PC-9 (cell line): ENCODE measurements at regions of chr22 and their contacts with region 1.

Region 1: DNA sequence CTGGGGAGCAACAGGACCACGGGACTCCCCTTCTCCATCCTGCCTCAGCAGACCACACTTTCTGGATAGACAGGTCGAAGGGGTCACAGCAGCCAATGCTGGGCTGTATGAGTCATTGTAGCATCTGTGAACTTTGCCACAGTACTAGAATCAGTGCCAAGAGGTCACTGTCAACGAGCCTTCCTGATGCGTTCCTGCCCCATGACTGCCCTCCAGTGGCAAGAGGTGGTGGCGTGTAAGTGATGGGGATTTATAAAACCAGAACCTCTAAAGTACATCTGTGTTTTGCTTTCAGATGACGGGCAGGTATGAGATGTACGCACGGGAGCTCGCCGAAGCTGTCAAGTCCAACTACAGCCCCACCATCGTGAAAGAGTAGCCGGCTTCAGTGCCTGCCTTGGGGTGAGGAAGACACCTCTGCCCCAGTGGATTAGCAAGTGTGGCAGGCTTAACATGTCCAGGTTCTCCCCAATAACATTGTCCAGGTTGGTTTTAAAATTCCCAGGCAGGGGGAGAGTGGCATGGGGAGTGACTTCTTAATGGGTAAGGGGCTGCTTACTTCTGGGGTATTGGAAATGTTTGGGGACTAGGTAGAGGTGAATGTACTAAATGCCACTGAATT is 29.4 kb downstream of the GUCD1 start:
- DNase-seq: peak; percentile 66 to 68
- H3K4me3 ChIP-seq: no peak overlapping the region
- H3K27ac ChIP-seq: no peak overlapping the region
- H3K4me1 ChIP-seq: peaks cover 26% of the 10 kb centered on the region
- H3K27me3 ChIP-seq: no peaks in the 10 kb centered on the region
- CTCF ChIP-seq: peak; percentile 91

Region 2: DNA sequence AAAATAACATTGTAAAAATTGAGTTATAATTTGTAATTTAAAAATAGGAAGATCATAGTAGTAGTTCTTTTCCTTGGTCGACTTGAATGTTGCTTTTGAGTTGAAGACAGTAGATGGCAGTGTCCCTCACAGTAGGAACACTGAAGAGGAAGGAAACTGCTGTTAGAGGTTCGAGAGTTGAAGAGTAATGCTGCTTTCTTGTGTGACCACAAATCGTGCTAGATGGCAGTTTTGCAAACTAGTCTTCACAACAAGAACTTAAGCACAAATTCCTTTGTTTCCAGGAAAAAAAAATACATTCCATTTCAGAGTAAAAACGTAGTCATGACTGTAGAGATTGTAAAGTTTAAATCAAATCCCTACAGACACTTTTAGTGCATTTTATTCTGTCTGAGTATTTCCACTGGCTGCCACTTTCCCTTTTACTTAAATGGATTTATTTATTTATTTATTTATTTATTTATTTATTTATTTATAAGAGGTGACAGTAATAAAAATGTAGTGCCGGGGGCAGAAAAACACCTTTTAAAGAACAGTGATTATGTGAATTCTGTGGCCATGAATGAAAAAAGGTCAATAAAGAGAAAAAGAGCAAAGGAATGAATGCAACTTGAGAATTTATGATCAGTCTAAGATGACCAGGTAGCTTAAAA is 200.3 kb before region 1 on chr22:
- CTCF ChIA-PET with region 1: interaction called, 4 read pairs
- POLR2A ChIA-PET with region 1: no interaction called
- intact Hi-C with region 1: loop called (anchors 10 kb)
- DNase-seq: peak in 1 of 2 experiments; percentile 68
- H3K4me3 ChIP-seq: no peak overlapping the region
- H3K27ac ChIP-seq: no peak overlapping the region
- H3K4me1 ChIP-seq: no peaks in the 10 kb centered on the region
- H3K27me3 ChIP-seq: no peaks in the 10 kb centered on the region
- CTCF ChIP-seq: peak; percentile 66

Region 3: GRCh38 chr22:24402460-24403192 is 122.9 kb before region 1 on chr22:
- CTCF ChIA-PET with region 1: no interaction called
- POLR2A ChIA-PET with region 1: no interaction called
- intact Hi-C with region 1: loop called (anchors 5 kb)
- DNase-seq: peak; percentile 69 to 97
- H3K4me3 ChIP-seq: peak overlapping the region; percentile 25; the same call in 1 of the 2 replicates
- H3K27ac ChIP-seq: peak overlapping the region; percentile 77
- H3K4me1 ChIP-seq: peaks cover 33% of the 10 kb centered on the region
- H3K27me3 ChIP-seq: no peaks in the 10 kb centered on the region
- CTCF ChIP-seq: no peak

Region 4: DNA sequence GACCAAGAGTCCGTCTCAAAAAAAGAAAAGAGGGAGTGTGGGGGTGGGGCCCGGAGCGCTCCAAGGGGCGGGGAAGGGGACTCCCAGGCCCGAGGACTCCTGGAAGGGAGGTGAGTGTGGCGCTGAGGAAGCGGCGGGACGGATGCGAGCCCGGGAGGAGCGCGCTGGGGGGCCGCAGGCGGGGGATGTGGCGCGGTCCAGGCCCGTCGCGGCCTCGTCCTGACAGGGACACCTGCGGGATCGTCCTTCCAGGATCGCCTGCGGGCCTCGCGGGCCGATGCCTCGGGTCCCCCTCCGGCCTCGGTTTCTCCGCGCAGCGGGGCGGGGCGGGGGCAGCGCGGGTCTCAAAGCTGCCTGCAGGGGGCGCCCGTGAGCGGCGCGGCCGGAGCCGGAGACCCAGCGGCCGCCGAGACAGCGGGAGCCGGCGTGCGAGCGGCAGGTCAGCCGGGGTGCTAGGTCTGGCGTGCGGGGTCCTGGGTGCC is 102.0 kb before region 1 on chr22:
- CTCF ChIA-PET with region 1: interaction called, 8 read pairs
- POLR2A ChIA-PET with region 1: no interaction called
- intact Hi-C with region 1: loop called (anchors 2 kb)
- DNase-seq: peak in 1 of 2 experiments; percentile 57
- H3K4me3 ChIP-seq: peak overlapping the region; percentile 78; the same call in 1 of the 2 replicates
- H3K27ac ChIP-seq: no peak overlapping the region
- H3K4me1 ChIP-seq: no peaks in the 10 kb centered on the region
- H3K27me3 ChIP-seq: no peaks in the 10 kb centered on the region
- CTCF ChIP-seq: peak; percentile 75

Region 5: GRCh38 chr22:24555157-24556039 is 29.9 kb after region 1 on chr22 and contains the start of gene SNRPD3:
- CTCF ChIA-PET with region 1: no interaction called
- POLR2A ChIA-PET with region 1: interaction called, 46 read pairs
- intact Hi-C with region 1: no loop called
- DNase-seq: peak; percentile 94 to 95
- H3K4me3 ChIP-seq: peak within 1 kb of the TSS; percentile 100
- H3K27ac ChIP-seq: peak within 1 kb of the TSS; percentile 75
- H3K4me1 ChIP-seq: peaks cover 20% of the 10 kb centered on the region
- H3K27me3 ChIP-seq: no peaks in the 10 kb centered on the region
- CTCF ChIP-seq: no peak; the same call in 1 of the 2 replicates
- total RNA-seq, gene SNRPD3: 77.1 and 117 TPM in 2 replicates

Region 6: GRCh38 chr22:24725736-24726135 is 200.2 kb after region 1 on chr22:
- CTCF ChIA-PET with region 1: no interaction called
- POLR2A ChIA-PET with region 1: no interaction called
- intact Hi-C with region 1: no loop called
- DNase-seq: no peak
- H3K4me3 ChIP-seq: no peak overlapping the region
- H3K27ac ChIP-seq: no peak overlapping the region
- H3K4me1 ChIP-seq: peaks cover 10% of the 10 kb centered on the region
- H3K27me3 ChIP-seq: peaks cover 38% of the 10 kb centered on the region
- CTCF ChIP-seq: no peak

Region 7: DNA sequence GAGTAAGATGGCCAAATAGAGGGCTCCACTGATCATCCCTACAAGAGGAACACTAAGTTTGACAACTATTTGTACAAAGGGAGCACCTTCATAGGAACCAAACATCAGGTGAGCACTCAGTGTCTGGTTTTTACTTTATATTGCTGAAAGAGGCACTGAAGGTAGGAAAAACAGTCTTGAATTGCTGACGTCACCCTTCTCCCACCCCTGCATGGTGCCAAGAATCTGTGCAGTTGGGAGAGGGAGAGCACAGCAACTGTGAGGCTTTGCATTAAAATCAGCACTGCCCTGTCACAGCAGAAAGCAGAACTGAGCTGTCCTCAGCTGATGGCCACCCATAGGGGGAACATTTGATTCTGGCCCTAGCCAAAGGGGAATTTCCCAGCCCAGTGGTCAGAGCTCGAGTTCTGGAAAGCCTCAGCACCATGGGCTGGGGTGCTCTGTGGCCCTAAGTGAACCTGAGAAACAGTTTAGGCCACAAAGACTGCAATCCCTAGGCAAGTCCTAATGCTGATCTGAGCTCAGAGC is 211.1 kb after region 1 on chr22:
- CTCF ChIA-PET with region 1: no interaction called
- POLR2A ChIA-PET with region 1: no interaction called
- intact Hi-C with region 1: no loop called
- DNase-seq: no peak
- H3K4me3 ChIP-seq: no peak overlapping the region
- H3K27ac ChIP-seq: no peak overlapping the region
- H3K4me1 ChIP-seq: no peaks in the 10 kb centered on the region
- H3K27me3 ChIP-seq: peaks cover 58% of the 10 kb centered on the region
- CTCF ChIP-seq: no peak